GM10248 (cell line): ENCODE measurements at regions of chr6 and their contacts with region 1.

Region 1: GRCh38 chr6:43506667-43507471 is 3.3 kb downstream of the LRRC73 start:
- DNase-seq: peak; percentile 86
- CTCF ChIP-seq: peak; percentile 92

Region 2: DNA sequence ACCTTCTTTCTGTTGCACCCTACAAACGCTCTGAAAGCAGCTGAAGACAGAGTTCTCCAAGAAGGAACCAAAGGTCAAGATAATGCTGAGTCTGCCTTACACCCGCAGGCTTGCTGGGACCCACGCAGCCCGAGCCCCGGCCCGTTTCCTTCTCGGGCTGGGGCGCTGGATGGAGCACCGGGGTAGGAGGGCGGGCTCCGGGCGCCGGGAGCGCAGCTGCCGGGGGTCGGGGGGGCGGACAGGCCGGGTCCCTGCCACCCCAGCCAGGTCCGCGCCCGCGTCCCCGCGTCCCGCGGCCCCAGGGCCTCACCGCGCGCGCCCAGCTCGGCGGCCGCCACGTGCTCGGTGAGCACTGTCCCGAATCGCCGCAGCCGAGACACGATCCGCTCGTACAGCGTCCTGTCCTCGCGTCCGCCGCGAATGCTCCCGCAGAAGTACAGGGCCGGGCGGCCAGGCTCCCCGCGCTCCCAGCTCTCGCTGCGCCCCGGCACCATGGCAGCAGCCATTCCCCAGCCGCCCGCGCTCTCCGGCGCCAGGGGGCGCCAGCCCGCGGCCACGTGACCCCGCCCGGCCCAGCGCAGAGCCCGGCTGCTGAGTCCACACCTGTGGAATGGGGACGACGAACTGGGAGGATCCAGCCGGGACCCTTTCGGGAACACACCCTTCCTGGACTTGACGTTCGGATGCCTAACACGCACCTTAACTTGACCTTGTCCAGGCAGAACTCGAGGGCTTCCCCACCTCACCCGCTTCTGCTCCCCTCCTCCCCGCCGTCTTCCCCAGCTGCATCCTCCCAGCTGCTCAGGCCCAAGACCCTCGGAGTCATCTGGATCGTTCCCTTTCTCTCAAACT is 277.7 kb before region 1 on chr6 and contains the start of gene DNPH1:
- CTCF ChIA-PET with region 1: interaction called, 39 read pairs
- POLR2A ChIA-PET with region 1: interaction called, 8 read pairs
- DNase-seq: peak; percentile 87
- CTCF ChIP-seq: peak; percentile 93

Region 3: DNA sequence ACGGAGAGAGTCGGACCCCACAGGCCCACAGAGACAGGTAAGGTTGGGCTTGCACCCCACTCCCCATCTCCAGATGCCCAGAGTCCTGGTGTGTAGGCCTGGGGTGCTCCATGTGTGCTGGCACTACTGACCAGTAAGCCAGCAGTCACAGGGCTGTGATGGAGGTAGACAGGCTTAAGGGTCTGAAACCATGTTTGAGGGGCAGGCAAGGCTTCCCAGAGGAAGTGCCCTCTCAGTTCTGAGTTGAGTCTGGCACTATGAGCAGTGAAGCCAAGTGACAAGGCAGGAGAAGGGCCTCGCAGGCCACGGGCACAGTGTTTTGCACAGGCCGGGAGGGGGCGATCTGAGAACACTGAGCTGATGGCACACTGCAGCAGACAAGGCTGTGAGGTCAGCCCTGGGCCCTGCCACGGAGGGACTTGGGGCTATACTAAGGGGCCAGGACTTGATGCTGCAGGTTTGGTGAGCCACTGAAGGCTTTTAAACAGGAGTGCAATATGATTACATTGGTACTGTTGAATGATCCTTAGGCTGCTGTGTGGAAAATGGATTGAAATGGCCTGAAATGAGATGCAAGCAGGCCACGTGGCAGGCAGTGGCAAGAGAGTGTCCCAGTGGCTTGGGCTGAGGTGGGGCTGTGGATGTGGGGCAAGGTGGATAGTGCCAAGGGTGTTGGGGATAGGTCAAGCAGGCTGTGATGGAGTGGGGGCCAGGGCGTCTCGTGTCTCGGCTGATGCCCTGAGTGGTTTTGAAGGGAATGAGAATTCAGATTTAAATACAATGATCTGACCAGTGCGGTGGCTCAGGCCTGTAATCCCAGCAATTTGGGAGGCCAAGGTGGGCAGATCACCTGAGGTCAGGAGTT is 243.3 kb before region 1 on chr6:
- CTCF ChIA-PET with region 1: interaction called, 77 read pairs
- POLR2A ChIA-PET with region 1: no interaction called
- DNase-seq: peak; percentile 93
- CTCF ChIP-seq: peak; percentile 94

Region 4: DNA sequence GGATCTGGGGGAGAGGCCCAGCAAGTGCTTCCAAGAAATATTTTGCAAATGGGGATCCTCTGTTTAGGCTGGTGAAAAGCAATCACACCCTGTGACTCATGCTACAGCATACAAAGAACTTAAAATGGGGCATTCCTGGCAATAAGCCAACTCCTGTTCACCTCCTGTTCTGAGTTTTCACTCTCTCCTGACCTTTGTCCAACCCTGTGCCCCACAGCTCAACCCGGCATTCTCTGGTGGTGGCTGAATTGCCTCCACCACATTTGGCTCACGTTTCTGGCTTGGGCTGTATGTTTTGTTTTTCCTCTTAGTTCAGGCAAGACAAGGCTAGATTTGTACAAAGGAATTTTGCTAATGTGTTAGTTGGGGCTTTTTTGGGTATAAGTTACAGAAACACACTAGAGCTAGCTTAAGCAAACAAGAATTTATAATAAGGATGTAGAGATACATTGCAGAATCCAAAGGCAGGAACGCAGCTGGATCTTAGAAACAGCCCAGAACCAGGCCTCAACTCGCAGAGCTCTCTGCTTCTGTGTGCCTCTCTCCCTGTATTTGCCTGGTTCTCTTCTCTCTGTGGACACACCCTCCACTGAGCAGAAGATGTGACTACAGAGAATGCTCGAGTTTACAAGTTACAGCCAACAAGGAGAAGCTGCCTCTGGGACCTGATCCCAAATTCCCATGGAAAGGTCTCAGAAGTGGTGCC is 70.1 kb before region 1 on chr6:
- CTCF ChIA-PET with region 1: interaction called, 16 read pairs
- POLR2A ChIA-PET with region 1: no interaction called
- DNase-seq: no peak
- CTCF ChIP-seq: no peak

Region 5: DNA sequence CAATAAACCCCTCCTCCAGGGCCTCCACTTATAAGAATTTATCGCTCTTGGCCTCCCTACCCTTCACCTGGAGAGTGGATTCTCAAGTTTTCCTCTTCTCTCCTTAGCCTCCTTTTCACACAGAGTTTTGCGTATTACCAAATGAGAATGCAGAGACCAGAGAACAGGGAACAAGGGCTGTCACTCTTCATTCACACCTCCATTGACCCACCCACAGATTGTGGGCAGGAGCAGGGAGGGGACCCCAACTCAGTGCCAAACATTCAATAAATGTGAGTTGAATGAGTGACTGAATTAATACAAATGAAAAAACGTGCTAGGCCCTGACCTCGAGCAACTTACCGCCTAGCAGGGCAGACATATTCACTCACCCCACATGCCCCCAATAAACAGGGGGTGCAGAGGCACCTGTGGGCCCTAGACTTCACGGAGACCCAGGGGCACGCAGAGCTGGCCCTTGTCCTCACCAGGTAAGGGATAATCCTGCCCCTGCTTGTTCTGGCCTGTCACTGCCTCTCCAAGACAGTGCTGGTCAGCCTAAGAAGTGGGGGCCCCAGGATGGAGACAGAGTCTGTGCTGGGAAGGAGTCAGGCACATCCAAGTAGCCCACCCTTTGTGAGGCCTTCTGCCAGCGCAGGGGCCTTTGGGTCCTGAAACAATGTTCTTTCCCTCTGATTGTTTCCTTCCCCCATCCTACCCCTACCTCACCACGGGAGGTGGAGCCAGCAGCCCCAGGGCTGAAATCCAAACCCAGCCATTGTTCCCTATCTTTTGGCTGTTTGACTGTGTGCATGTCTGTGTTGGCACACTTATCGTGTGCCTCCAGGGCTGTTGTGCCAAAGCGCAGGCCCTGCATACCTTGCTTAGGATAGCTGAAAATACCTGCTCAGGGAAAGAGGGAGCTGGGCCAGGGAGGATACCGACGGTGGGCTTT is 37.9 kb before region 1 on chr6:
- CTCF ChIA-PET with region 1: interaction called, 15 read pairs
- POLR2A ChIA-PET with region 1: interaction called, 5 read pairs
- DNase-seq: no peak
- CTCF ChIP-seq: no peak

Region 6: DNA sequence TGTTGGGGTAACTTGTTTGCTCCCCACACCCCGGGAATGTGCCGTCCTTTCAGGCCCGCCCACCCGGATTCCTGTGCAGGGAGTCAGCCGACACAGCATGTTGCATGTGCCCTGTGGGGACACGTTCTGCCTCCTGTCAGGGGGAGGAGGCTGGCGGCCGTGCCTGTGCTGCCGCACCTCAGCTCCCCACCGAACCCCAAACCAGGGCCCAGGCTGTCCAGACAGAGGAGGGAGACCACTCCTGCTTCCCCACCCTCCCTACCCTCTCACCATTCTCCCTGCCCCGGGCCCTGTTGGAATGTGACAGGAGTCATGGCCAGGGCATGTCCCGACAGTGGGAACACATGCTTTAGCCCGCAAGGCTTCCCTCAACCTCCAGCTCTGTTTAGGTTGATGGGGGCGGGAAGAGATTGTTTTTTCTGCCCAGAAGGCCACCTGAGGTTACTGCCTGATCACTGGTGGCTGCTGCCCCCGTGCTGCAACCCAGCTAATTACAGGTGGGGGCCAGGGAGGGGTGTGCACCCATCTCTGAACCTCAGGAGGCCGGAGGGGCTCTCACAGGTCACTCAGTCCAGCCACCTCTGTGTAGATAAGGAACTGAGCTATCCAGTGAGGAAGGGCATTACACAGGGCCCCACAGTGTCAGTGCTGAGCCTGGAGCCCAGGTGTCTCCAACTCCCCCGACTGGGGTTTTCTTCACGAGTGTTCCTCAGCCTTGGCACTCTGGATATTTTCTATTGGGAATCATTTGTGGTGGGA is 10.3 kb before region 1 on chr6:
- CTCF ChIA-PET with region 1: interaction called, 125 read pairs
- POLR2A ChIA-PET with region 1: interaction called, 3 read pairs
- DNase-seq: no peak
- CTCF ChIP-seq: peak; percentile 63

Region 7: GRCh38 chr6:43524483-43524961 is 17.7 kb after region 1 on chr6:
- CTCF ChIA-PET with region 1: interaction called, 56 read pairs
- POLR2A ChIA-PET with region 1: no interaction called
- DNase-seq: no peak
- CTCF ChIP-seq: no peak